ENCODE measurements at regions of chr3 and their contacts with region 1.

Region 1: DNA sequence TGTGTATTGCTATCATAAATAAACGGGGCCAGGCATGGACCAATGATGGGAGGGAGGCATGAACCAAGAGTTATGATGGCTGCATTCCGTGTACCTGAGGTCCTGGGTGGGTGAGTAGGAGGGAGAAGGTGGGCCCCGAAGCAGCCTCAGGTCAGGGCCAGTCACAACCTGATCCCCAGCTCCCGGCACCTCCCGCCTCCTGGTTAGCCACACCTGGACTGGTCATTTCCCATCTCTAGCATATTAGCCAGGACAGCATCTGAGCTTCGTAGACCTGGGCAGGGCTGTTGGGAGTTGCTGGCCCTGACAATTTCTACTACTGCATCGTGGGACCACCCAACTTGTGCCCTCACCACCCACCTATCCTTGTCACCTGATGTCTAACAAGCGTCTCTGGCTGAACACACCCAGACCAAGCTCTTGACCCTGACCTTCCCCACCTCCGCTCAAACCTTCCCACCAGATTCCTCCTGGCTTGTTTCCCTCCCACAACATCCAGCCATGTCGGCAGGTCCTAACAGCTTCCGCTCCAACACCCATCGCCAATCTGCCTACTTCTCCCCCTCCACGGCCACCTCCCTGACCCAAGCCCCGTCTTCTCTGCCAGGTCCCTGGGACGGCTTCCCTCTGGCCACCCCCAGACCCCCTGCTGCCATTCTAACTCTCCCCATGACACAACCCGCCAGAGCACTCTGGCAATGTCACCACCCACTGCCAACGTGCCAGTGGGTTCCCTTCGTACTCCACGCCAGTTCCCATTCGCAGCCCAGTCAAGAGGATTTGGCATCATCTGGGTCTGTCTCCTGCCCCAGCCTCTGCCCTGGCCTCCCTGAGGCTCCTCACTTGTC is 133.8 kb upstream of the IQSEC1 start:
- DNase-seq: no peak
- ATAC-seq: no peak
- H3K4me3 ChIP-seq: no peak overlapping the region
- H3K27ac ChIP-seq: no peak overlapping the region
- H3K4me1 ChIP-seq: peaks cover 0 to 9% of the 10 kb centered on the region in 2 experiments; a peak in 2 of 5 replicates
- H3K27me3 ChIP-seq: peaks cover 63 to 90% of the 10 kb centered on the region in 2 experiments
- CTCF ChIP-seq: no peak
- EP300 ChIP-seq: no peak
- POLR2A ChIP-seq: no peak
- RAD21 ChIP-seq: no peak

Region 2: GRCh38 chr3:13189639-13190377 is 17.2 kb before region 1 on chr3:
- CTCF ChIA-PET with region 1: no interaction called
- POLR2A ChIA-PET with region 1: no interaction called
- in situ Hi-C with region 1: no loop called
- intact Hi-C with region 1: loop called (anchors 1 kb)
- DNase-seq: peak in 2 of 4 experiments; percentile 26 to 35
- ATAC-seq: peak; percentile 12; the same call in 1 of the 3 replicates
- H3K4me3 ChIP-seq: no peak overlapping the region
- H3K27ac ChIP-seq: no peak overlapping the region
- H3K4me1 ChIP-seq: peaks cover 0 to 20% of the 10 kb centered on the region in 2 experiments; a peak in 3 of 5 replicates
- H3K27me3 ChIP-seq: peaks cover 54 to 81% of the 10 kb centered on the region in 2 experiments
- CTCF ChIP-seq: no peak
- EP300 ChIP-seq: no peak
- POLR2A ChIP-seq: no peak
- RAD21 ChIP-seq: no peak